ENCODE measurements at regions of chr20 and their contacts with region 1.

Region 1: DNA sequence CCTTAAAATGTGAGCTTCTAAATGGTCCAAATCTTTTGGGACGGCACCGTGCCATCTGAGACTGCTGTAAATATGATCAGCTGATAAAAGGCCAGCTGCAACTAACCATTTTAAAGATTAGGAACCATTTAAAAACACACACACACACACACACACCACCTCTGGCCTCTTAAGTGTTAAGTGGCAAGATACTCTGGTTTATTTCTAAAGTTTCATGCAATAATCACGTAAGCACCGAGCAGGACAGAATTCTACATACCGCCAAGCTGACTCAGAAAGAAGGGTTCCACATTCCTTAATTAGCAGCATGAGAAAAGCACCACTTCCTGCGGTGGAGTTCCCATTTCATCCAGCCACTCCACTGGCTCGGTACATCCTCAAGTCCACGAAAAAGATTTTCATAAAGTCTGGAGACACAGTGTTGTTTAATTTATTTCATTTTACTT is 17.8 kb upstream of the ZNF217 start:
- DNase-seq: no peak
- ATAC-seq: no peak
- H3K4me3 Mint-ChIP-seq: no peak overlapping the region
- H3K27ac Mint-ChIP-seq: no peak overlapping the region
- H3K4me1 Mint-ChIP-seq: peaks cover 30% of the 10 kb centered on the region
- H3K27me3 Mint-ChIP-seq: no peaks in the 10 kb centered on the region

Region 2: GRCh38 chr20:53570521-53571357 is 40.7 kb before region 1 on chr20:
- POLR2A ChIA-PET with region 1: no interaction called
- DNase-seq: no peak
- ATAC-seq: no peak
- H3K4me3 Mint-ChIP-seq: no peak overlapping the region
- H3K27ac Mint-ChIP-seq: no peak overlapping the region
- H3K4me1 Mint-ChIP-seq: peaks cover 59% of the 10 kb centered on the region
- H3K27me3 Mint-ChIP-seq: no peaks in the 10 kb centered on the region

Region 3: GRCh38 chr20:53708129-53708968 is 96.9 kb after region 1 on chr20:
- POLR2A ChIA-PET with region 1: interaction called, 10 read pairs
- DNase-seq: no peak
- ATAC-seq: peak; percentile 60
- H3K4me3 Mint-ChIP-seq: peak overlapping the region; percentile 82
- H3K27ac Mint-ChIP-seq: peak overlapping the region; percentile 94
- H3K4me1 Mint-ChIP-seq: peaks cover 50% of the 10 kb centered on the region
- H3K27me3 Mint-ChIP-seq: no peaks in the 10 kb centered on the region